Activated CD4-positive, alpha-beta T cell treated with anti-CD3 and anti-CD28 coated beads, Interleukin-2, amount 10 ng/mL, durations not matched to agents 7 days and 5 days (primary cell): ENCODE measurements at regions of chr17 and their contacts with region 1.

Region 1: GRCh38 chr17:40317880-40318829 is 9.2 kb downstream of the RARA start:
- DNase-seq: peak; percentile 93
- H3K4me3 Mint-ChIP-seq: peak overlapping the region; percentile 99
- H3K27ac Mint-ChIP-seq: peak overlapping the region; percentile 96
- H3K4me1 Mint-ChIP-seq: peaks cover 64% of the 10 kb centered on the region
- H3K27me3 Mint-ChIP-seq: no peaks in the 10 kb centered on the region

Region 2: GRCh38 chr17:39999067-39999466 is 319.1 kb before region 1 on chr17:
- CTCF ChIA-PET with region 1: no interaction called
- POLR2A ChIA-PET with region 1: no interaction called
- DNase-seq: no peak
- H3K4me3 Mint-ChIP-seq: no peak overlapping the region
- H3K27ac Mint-ChIP-seq: no peak overlapping the region
- H3K4me1 Mint-ChIP-seq: no peaks in the 10 kb centered on the region
- H3K27me3 Mint-ChIP-seq: no peaks in the 10 kb centered on the region

Region 3: DNA sequence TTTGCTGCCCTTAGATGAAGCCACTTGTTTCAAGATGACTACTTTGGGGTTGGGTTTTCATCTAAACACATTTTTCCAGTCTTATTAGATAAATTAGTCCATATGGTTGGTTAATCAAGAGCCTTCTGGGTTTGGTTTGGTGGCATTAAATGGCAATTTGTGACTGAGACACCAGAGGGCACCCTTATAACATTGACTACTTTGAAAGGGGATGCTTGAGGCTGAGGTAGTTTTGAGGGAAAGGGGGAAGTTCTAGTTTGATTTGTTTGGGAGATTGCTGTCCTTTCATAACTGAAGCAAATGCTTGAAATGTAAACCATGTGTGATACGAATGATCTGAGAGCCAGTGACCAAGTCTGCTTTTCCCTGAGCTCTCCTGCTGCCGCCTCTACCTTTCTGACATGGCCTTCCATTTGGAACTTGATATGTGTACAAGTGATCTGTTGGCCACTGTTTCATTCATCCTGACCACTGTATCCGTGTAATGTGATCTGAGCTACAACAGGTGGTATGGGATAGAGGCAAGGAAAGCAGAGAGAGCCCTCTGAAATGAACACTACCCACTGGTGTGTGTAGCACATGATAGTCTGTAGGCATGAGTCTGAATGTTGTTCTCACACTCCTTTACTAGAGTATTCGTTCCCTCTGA is 15.0 kb before region 1 on chr17:
- CTCF ChIA-PET with region 1: interaction called, 32 read pairs
- POLR2A ChIA-PET with region 1: interaction called, 3 read pairs
- DNase-seq: peak; percentile 65
- H3K4me3 Mint-ChIP-seq: no peak overlapping the region
- H3K27ac Mint-ChIP-seq: no peak overlapping the region
- H3K4me1 Mint-ChIP-seq: peaks cover 22% of the 10 kb centered on the region
- H3K27me3 Mint-ChIP-seq: no peaks in the 10 kb centered on the region